ENCODE measurements at regions of chr5 and their contacts with region 1.

Region 1: GRCh38 chr5:108003178-108003577 is 332.4 kb upstream of the EFNA5 start:
- DNase-seq: no peak
- H3K4me3 ChIP-seq: peak overlapping the region in 1 of 2 donors; percentile 10
- H3K27ac ChIP-seq: no peak overlapping the region
- H3K4me1 ChIP-seq: no peaks in the 10 kb centered on the region
- H3K27me3 ChIP-seq: no peaks in the 10 kb centered on the region
- CTCF ChIP-seq: no peak
- POLR2A ChIP-seq: no peak

Region 2: GRCh38 chr5:108919591-108920326 is 916.6 kb after region 1 on chr5:
- intact Hi-C with region 1: loop called (anchors 10 kb)
- DNase-seq: no peak
- H3K4me3 ChIP-seq: no peak overlapping the region
- H3K27ac ChIP-seq: no peak overlapping the region
- H3K4me1 ChIP-seq: no peaks in the 10 kb centered on the region
- H3K27me3 ChIP-seq: no peaks in the 10 kb centered on the region
- CTCF ChIP-seq: no peak
- POLR2A ChIP-seq: no peak